ENCODE measurements at regions of chr5 and their contacts with region 1.

Region 1: GRCh38 chr5:134140530-134141201 is 26.2 kb downstream of the TCF7 start:
- DNase-seq: peak; percentile 41
- H3K4me3 ChIP-seq: no peak overlapping the region
- H3K27ac ChIP-seq: no peak overlapping the region
- H3K27me3 ChIP-seq: no peaks in the 10 kb centered on the region
- CTCF ChIP-seq: peak; percentile 87

Region 2: GRCh38 chr5:133546500-133546899 is 594.2 kb before region 1 on chr5:
- CTCF ChIA-PET with region 1: no interaction called
- POLR2A ChIA-PET with region 1: no interaction called
- DNase-seq: no peak
- H3K4me3 ChIP-seq: no peak overlapping the region
- H3K27ac ChIP-seq: no peak overlapping the region
- H3K27me3 ChIP-seq: no peaks in the 10 kb centered on the region
- CTCF ChIP-seq: no peak

Region 3: GRCh38 chr5:134026521-134027268 is 114.0 kb before region 1 on chr5:
- CTCF ChIA-PET with region 1: interaction called, 11 read pairs
- POLR2A ChIA-PET with region 1: no interaction called
- DNase-seq: peak; percentile 29
- H3K4me3 ChIP-seq: no peak overlapping the region
- H3K27ac ChIP-seq: no peak overlapping the region
- H3K27me3 ChIP-seq: peaks cover 44% of the 10 kb centered on the region
- CTCF ChIP-seq: peak; percentile 69

Region 4: DNA sequence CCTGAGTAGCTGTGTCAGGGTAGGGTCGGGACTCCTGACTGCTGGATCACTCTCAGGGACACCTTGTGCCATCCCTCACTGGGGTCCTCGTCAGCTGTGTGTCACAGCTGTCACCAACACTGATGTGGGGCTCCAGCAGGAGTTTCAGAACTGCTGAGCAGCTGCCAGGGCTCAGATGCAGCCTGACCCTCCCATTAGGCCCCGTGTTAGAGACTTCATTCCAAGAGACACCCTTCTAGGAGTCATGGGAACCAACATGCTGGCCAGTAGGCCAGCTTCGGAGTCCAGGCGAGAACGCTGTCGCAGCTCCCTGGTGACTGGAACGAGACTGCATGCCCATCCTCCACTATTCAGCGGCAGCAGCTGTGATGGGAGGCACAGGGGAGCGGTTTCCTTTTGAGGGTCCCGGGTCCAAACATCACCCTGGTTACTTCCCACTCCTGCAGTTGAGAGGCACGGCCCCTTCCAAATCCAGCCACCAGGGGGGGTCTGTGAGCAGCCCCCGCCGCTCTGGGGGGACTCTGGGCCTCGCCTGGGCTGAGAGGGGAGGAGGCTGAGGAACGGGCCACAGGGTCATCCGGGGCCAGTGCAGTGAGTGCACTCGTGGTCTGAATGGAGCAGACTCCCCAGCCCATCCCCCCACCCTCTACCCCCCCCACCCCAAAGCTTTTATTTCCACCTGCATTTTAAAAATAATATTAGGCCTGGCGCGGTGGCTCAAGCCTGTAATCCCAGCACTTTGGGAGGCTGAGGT is 38.8 kb before region 1 on chr5:
- CTCF ChIA-PET with region 1: interaction called, 13 read pairs
- POLR2A ChIA-PET with region 1: no interaction called
- DNase-seq: no peak
- H3K4me3 ChIP-seq: no peak overlapping the region
- H3K27ac ChIP-seq: no peak overlapping the region
- H3K27me3 ChIP-seq: peaks cover 18% of the 10 kb centered on the region
- CTCF ChIP-seq: peak; percentile 87

Region 5: GRCh38 chr5:134113902-134114875 is 26.5 kb before region 1 on chr5 and contains the start of gene TCF7:
- CTCF ChIA-PET with region 1: interaction called, 17 read pairs
- POLR2A ChIA-PET with region 1: no interaction called
- DNase-seq: peak; percentile 55
- H3K4me3 ChIP-seq: peak within 1 kb of the TSS; percentile 64
- H3K27ac ChIP-seq: no peak within 1 kb of the TSS
- H3K27me3 ChIP-seq: peaks cover 6% of the 10 kb centered on the region
- CTCF ChIP-seq: no peak
- polyA plus RNA-seq, gene TCF7: 2.1 and 2.7 TPM in 2 replicates

Region 6: DNA sequence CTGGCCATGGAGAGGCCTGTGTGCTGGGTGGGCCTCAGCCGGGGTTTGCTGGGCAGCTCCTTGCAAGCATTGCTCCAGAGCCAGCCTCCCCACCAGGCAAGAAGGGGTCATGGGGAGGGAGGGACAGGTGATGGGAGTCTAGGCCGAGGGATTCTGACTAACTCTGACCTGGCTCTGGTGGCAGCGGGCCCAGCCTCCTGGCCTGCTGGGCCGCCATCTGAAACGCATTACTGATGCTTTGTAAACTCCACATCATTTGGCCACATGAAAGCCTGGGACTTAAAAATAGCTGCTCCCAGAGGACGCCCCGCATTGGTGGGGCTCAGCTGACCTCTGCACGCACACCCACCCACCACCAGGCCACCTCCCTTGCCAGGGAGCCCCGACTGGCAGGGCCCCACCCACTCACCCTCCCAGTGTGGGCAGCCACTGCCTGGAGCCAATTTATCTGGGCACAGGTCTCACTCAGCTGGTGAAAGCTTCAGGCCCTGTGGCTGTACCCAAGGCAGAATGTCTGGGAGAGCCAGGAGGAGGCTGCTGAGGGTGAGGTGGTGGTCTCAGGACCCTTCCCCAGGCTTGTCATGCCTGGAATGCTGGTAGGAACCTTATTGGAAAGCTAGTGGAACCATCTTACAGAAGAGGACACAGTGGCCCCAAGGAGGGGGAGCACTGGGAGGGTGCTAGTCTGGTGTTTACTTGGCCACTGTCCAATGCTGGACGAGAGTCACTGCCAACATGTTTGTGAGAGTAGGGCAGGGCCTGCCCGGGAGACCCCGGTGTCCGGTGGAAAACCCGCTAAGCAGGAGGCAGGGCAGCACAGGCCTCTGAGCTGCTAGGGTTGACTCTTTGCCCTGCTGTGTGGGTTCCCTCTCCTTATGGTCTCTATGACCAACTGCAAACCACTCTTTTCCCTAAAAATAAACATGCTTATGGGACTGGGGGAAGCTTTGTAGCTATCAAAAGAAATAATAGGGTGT is 15.3 kb before region 1 on chr5:
- CTCF ChIA-PET with region 1: interaction called, 42 read pairs
- POLR2A ChIA-PET with region 1: interaction called, 5 read pairs
- DNase-seq: peak; percentile 75
- H3K4me3 ChIP-seq: no peak overlapping the region
- H3K27ac ChIP-seq: peak overlapping the region; percentile 96
- H3K27me3 ChIP-seq: no peaks in the 10 kb centered on the region
- CTCF ChIP-seq: no peak

Region 7: GRCh38 chr5:134153657-134154056 is 13.0 kb after region 1 on chr5:
- CTCF ChIA-PET with region 1: interaction called, 25 read pairs
- POLR2A ChIA-PET with region 1: interaction called, 4 read pairs
- DNase-seq: no peak
- H3K4me3 ChIP-seq: no peak overlapping the region
- H3K27ac ChIP-seq: no peak overlapping the region
- H3K27me3 ChIP-seq: no peaks in the 10 kb centered on the region
- CTCF ChIP-seq: no peak

Region 8: DNA sequence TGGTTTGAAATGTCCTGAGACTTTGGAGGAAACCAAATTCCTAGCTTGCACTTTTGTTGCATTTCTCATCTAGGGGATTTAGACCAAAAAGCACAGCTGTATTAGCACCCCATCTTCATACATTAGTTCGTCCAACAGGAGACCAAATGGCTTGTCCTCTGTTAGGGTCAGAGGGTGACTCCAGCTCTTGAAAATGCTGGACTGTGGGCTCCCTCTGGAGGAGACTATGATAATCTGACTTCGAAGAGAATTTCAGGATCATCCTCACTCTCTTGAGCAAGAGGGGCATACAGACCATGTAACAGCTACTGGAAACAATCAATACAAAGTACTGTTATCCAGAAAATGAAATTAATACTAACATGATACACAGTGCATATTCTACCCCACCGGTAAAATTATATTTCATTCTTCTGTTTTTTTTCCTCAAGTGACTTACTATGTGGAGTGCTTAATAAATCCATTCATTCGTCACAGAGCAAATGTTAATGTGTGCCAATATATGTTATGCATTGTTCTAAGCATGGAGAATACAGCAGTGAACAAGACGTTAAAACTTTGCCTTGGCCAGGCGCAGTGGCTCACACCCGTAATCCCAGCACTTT is 148.9 kb after region 1 on chr5:
- CTCF ChIA-PET with region 1: interaction called, 10 read pairs
- POLR2A ChIA-PET with region 1: no interaction called
- DNase-seq: peak; percentile 65
- H3K4me3 ChIP-seq: no peak overlapping the region
- H3K27ac ChIP-seq: no peak overlapping the region
- H3K27me3 ChIP-seq: peaks cover 5% of the 10 kb centered on the region
- CTCF ChIP-seq: peak; percentile 78

Region 9: DNA sequence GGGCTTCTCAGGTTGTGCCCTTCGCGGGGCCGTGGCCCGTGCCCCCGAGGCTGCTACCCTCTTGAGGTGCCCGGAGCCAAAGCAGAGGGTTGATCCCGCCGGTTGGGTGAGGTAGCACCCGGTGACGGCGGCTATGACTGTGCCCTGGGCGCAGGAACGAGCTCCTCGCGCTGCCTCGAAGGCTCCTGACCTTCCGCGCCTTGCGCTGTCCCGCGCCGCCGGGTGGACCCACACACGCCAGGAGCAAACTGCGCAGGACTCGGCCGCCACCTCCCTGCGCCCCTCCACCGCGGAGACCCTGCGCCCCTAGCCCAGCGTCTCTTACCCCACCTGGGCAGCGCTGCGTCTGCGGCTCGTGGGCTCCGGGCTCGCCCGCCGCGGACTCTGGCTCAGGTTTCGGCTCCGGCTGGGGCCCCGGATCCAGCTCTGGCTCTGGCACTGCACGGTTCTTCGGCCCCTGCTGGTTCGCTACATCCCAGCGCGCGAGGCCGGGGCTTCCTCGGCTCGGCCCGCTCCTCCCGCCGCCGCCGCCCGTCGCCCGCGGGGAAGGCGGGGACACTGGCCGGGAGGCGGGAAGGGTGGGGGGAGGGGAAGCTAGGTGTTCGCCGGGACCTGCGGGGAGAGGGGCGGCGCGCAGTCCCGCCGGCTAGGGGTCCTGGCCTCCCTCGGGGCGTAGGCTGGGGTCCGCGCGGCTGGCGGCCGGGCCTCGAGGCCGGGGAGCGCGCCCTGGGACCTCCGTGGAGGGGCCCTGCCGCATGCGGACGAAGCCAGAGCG is 898.8 kb after region 1 on chr5:
- CTCF ChIA-PET with region 1: no interaction called
- POLR2A ChIA-PET with region 1: no interaction called
- DNase-seq: no peak
- H3K4me3 ChIP-seq: peak overlapping the region; percentile 39
- H3K27ac ChIP-seq: no peak overlapping the region
- H3K27me3 ChIP-seq: peaks cover 73% of the 10 kb centered on the region
- CTCF ChIP-seq: no peak